Caco-2 (cell line): ENCODE measurements at regions of chr10 and their contacts with region 1.

Region 1: GRCh38 chr10:131579251-131580071 is 267.9 kb upstream of the TCERG1L start:
- DNase-seq: no peak
- H3K4me3 ChIP-seq: no peak overlapping the region
- H3K4me3 Mint-ChIP-seq: no peak overlapping the region
- H3K27ac Mint-ChIP-seq: no peak overlapping the region
- H3K4me1 ChIP-seq: no peaks in the 10 kb centered on the region
- H3K4me1 Mint-ChIP-seq: no peaks in the 10 kb centered on the region
- H3K27me3 ChIP-seq: no peaks in the 10 kb centered on the region
- H3K27me3 Mint-ChIP-seq: no peaks in the 10 kb centered on the region
- CTCF ChIP-seq: no peak

Region 2: GRCh38 chr10:131880006-131880590 is 300.6 kb after region 1 on chr10:
- CTCF ChIA-PET with region 1: no interaction called
- POLR2A ChIA-PET with region 1: interaction called, 11 read pairs
- intact Hi-C with region 1: no loop called
- DNase-seq: no peak
- H3K4me3 ChIP-seq: no peak overlapping the region
- H3K4me3 Mint-ChIP-seq: no peak overlapping the region
- H3K27ac Mint-ChIP-seq: no peak overlapping the region
- H3K4me1 ChIP-seq: no peaks in the 10 kb centered on the region
- H3K4me1 Mint-ChIP-seq: no peaks in the 10 kb centered on the region
- H3K27me3 ChIP-seq: no peaks in the 10 kb centered on the region
- H3K27me3 Mint-ChIP-seq: peaks cover 18% of the 10 kb centered on the region
- CTCF ChIP-seq: no peak